ENCODE measurements at regions of chr20 and their contacts with region 1.

Region 1: GRCh38 chr20:63009045-63009961 is 2.5 kb upstream of the BHLHE23 start:
- DNase-seq: peak; percentile 75
- H3K4me3 Mint-ChIP-seq: peak overlapping the region; percentile 21
- H3K27ac Mint-ChIP-seq: peak overlapping the region; percentile 52
- H3K4me1 Mint-ChIP-seq: peaks cover 11% of the 10 kb centered on the region
- H3K27me3 Mint-ChIP-seq: peaks cover 68% of the 10 kb centered on the region

Region 2: DNA sequence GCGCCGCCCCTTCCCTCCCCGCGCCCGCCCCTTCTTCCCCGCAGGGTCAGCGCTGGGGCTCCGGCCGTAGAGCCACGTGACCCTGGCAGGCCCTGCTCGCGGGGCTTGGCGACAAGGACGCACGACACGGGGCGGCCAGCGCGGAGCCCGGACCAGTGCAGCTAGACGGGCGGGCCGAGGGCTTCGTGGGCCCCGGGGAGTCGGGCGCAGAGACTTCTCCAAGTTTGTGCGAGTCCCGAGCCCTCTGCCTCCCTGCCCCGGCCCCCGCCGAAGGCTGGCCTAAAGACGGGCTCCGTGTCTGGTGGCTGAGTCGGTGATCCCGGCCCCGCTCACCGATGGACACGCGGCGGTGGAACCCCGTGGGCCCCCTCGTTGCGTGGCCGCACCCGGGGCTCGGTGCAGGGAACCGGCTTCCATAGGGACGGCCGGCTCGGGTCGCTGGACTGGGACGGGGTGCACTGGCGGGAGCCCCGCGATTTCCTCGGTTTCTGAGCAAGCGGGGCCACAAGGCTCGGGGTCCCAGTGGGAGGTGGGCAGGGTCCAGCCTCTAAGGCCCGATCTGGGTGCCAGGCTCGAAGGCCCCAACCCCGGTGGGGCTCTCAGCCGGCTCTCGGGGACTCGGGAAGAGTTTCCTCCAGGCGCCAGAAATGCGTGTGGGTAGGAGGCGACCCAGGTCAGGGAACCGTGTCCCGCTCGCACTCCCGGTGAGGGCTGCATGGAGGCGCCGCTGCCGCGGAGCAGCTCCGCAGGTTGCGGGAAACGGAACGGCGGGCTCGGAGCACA is 533.1 kb before region 1 on chr20:
- intact Hi-C with region 1: loop called (anchors 10 kb)
- DNase-seq: no peak
- H3K4me3 Mint-ChIP-seq: no peak overlapping the region
- H3K27ac Mint-ChIP-seq: no peak overlapping the region
- H3K4me1 Mint-ChIP-seq: no peaks in the 10 kb centered on the region
- H3K27me3 Mint-ChIP-seq: peaks cover 43% of the 10 kb centered on the region

Region 3: DNA sequence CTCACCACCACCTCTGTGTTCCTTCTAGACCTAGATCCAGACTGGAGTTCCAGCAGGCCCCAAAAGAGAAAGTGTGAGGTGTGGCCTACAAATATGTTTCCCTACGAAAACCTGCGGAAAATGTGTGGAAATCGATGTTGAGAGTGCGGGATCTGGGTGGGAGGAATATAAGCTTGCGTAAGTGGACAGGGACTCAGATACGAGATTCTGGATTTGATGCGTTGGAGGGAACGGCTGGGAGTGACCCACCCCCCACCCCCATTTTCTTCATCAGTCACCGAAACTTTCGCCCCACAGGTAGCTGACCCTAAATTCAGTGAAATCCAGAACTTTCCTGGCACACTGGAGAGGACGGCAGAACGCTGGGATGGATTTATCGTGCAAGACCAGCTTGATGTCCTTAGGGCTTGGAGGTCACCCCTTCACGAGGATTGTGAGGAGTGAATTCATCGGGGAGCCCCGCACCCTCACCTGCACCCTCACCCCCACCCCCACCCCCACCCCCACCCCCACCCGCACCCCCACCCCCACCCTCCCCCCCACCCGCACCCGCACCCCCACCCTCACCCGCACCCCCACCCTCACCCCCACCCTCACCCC is 134.5 kb before region 1 on chr20:
- intact Hi-C with region 1: loop called (anchors 5 kb)
- DNase-seq: no peak
- H3K4me3 Mint-ChIP-seq: no peak overlapping the region
- H3K27ac Mint-ChIP-seq: no peak overlapping the region
- H3K4me1 Mint-ChIP-seq: peaks cover 10% of the 10 kb centered on the region
- H3K27me3 Mint-ChIP-seq: peaks cover 2% of the 10 kb centered on the region

Region 4: GRCh38 chr20:62972270-62973032 is 36.9 kb before region 1 on chr20:
- intact Hi-C with region 1: loop called (anchors 1 kb)
- DNase-seq: peak; percentile 77
- H3K4me3 Mint-ChIP-seq: no peak overlapping the region
- H3K27ac Mint-ChIP-seq: no peak overlapping the region
- H3K4me1 Mint-ChIP-seq: peaks cover 16% of the 10 kb centered on the region
- H3K27me3 Mint-ChIP-seq: peaks cover 37% of the 10 kb centered on the region

Measured in activated T-helper 2 cell treated with anti-CD3 and anti-CD28 coated beads, Interferon-gamma antibody, Interleukin-2, Interleukin-4, amounts not matched to agents 10 μg/mL and 5 μg/mL and 100 μg/mL, durations not matched to agents 14 hours and 24 hours and 36 hours (primary cell).